Endothelial cell of umbilical vein (primary cell): ENCODE measurements at regions of chr2 and their contacts with region 1.

Region 1: DNA sequence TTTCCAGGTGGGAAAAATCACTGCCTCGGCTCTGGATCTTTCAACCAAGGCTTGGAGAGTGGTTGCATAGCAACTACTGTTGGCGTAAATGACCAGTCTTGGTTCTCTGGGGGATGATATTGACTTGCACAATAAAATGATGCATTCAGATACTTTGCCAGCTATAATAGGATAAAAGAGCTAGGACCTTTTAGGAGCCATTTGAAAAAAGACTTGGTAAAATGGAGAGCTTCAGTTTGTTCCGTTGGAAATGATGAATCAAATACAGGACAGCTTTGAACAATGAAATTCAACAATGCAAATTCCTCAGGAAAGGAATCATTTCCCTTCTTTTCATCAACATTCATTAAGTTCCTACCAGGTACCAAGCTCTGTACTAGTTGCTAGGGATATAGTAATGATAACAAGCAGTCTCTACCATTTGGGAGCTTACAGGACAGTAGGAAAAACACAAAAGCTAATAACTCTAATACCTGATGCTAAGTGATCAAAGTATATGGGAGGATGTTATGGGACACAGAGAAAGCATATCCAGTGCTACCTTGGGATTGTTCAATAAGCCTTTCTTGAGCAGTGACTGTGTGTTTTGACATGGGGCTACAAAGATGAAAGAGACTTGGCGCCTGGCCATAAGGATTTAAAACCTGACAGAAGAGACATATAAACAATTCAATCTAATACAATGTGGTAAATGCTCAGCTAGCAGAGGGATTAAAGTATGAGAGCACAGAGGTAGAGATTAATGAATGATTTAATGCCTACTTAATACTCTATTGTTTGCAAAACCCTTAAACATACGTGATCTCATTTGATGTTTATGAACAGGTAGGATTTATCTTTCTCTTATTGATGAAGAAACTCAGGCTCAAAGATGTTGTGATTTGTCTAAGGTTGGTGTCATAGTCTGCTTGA is 110.7 kb downstream of the QPCT start:
- DNase-seq: peak; percentile 95
- H3K4me3 ChIP-seq: no peak overlapping the region
- H3K27ac ChIP-seq: peak overlapping the region; percentile 99
- H3K4me1 ChIP-seq: peaks cover 67% of the 10 kb centered on the region
- H3K27me3 ChIP-seq: no peaks in the 10 kb centered on the region
- CTCF ChIP-seq: no peak
- POLR2A ChIP-seq: peak; percentile 9

Region 2: DNA sequence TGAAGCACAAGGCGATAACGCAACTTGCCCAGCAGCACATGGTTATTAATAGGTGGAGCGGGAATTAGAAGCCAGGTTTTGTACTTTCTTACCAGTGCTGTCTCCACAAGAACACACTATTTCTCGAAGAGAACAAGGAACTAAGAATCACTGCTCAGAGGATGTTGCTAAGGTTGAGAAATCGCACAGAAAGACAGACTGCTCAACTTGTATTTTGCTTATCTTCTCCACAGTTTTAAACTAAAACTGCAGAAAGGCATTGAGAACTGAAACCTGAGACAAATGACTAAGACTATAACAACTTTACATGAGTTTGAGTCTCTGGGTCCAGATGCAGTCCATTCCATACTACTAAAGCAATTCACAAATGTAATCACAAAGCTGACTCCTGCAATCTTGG is 136.7 kb before region 1 on chr2:
- CTCF ChIA-PET with region 1: no interaction called
- POLR2A ChIA-PET with region 1: no interaction called
- dilution Hi-C with region 1: no loop called
- intact Hi-C with region 1: no loop called
- DNase-seq: no peak
- H3K4me3 ChIP-seq: no peak overlapping the region
- H3K27ac ChIP-seq: no peak overlapping the region
- H3K4me1 ChIP-seq: peaks cover 19% of the 10 kb centered on the region
- H3K27me3 ChIP-seq: no peaks in the 10 kb centered on the region
- CTCF ChIP-seq: no peak
- POLR2A ChIP-seq: no peak

Region 3: GRCh38 chr2:37529830-37530415 is 74.8 kb after region 1 on chr2:
- CTCF ChIA-PET with region 1: no interaction called
- POLR2A ChIA-PET with region 1: no interaction called
- dilution Hi-C with region 1: no loop called
- intact Hi-C with region 1: loop called (anchors 2 kb)
- DNase-seq: no peak
- H3K4me3 ChIP-seq: no peak overlapping the region
- H3K27ac ChIP-seq: no peak overlapping the region
- H3K4me1 ChIP-seq: no peaks in the 10 kb centered on the region
- H3K27me3 ChIP-seq: no peaks in the 10 kb centered on the region
- CTCF ChIP-seq: no peak
- POLR2A ChIP-seq: no peak

Region 4: GRCh38 chr2:37585982-37586621 is 131.0 kb after region 1 on chr2:
- CTCF ChIA-PET with region 1: no interaction called
- POLR2A ChIA-PET with region 1: no interaction called
- dilution Hi-C with region 1: no loop called
- intact Hi-C with region 1: loop called (anchors 1 kb)
- DNase-seq: peak; percentile 96
- H3K4me3 ChIP-seq: no peak overlapping the region
- H3K27ac ChIP-seq: peak overlapping the region; percentile 75
- H3K4me1 ChIP-seq: peaks cover 88% of the 10 kb centered on the region
- H3K27me3 ChIP-seq: no peaks in the 10 kb centered on the region
- CTCF ChIP-seq: no peak
- POLR2A ChIP-seq: no peak

Region 5: GRCh38 chr2:37648331-37649011 is 193.4 kb after region 1 on chr2:
- CTCF ChIA-PET with region 1: interaction called, 4 read pairs
- POLR2A ChIA-PET with region 1: no interaction called
- dilution Hi-C with region 1: no loop called
- intact Hi-C with region 1: loop called (anchors 1 kb)
- DNase-seq: peak; percentile 80
- H3K4me3 ChIP-seq: no peak overlapping the region
- H3K27ac ChIP-seq: peak overlapping the region; percentile 68
- H3K4me1 ChIP-seq: peaks cover 80% of the 10 kb centered on the region
- H3K27me3 ChIP-seq: no peaks in the 10 kb centered on the region
- CTCF ChIP-seq: peak; percentile 33 to 41
- POLR2A ChIP-seq: no peak

Region 6: GRCh38 chr2:37653805-37654378 is 198.8 kb after region 1 on chr2:
- CTCF ChIA-PET with region 1: interaction called, 4 read pairs
- POLR2A ChIA-PET with region 1: no interaction called
- dilution Hi-C with region 1: no loop called
- intact Hi-C with region 1: loop called (anchors 1 kb)
- DNase-seq: no peak
- H3K4me3 ChIP-seq: no peak overlapping the region
- H3K27ac ChIP-seq: peak overlapping the region; percentile 97
- H3K4me1 ChIP-seq: peaks cover 79% of the 10 kb centered on the region
- H3K27me3 ChIP-seq: no peaks in the 10 kb centered on the region
- CTCF ChIP-seq: no peak
- POLR2A ChIP-seq: peak; percentile 6

Region 7: GRCh38 chr2:37851828-37852584 is 396.9 kb after region 1 on chr2:
- CTCF ChIA-PET with region 1: no interaction called
- POLR2A ChIA-PET with region 1: no interaction called
- dilution Hi-C with region 1: no loop called
- intact Hi-C with region 1: loop called (anchors 1 kb)
- DNase-seq: no peak
- H3K4me3 ChIP-seq: no peak overlapping the region
- H3K27ac ChIP-seq: no peak overlapping the region
- H3K4me1 ChIP-seq: peaks cover 41% of the 10 kb centered on the region
- H3K27me3 ChIP-seq: no peaks in the 10 kb centered on the region
- CTCF ChIP-seq: no peak
- POLR2A ChIP-seq: no peak